ENCODE measurements at regions of chr3 and their contacts with region 1.

Region 1: DNA sequence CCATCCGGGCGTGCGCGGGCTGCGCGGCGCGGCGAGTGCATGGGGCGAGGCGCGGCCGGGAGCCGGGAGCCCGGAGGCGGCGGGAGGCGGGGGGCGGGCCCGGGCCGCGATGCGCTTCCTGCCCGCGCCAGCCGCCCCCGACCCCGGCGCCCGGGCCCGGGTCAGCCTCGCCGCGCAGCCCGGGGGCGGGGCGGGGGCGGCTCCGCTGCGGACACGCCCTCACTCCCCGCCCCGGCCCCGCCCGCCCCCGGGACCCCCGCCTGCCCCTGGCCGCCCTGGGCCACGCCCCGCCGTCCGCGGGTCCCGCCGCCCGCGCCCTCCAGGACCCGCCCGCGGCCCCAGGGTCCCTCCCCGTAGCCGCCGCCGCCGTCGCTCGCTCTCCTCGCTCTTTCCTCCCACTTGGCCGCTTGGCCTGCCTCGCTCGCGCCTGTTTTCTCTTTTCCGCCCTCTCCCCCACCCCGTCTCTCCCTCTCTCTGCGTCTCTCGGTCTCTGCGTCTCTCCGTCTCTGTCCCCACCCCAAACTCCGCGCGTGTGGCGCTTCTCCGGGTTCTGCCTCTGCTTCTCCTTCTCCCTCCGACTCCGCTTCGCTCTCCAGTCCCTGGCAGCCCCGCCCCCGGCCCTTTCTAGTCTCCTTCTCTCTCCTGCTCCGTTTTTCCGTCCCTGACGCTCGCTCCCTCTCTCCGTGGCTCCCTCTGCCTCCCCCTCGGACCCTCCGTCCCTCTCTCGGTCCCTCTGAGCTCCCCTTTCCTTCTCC is at the start of gene PLXND1:
- DNase-seq: peak; percentile 27
- H3K4me3 Mint-ChIP-seq: peak within 1 kb of the TSS; percentile 77
- H3K27ac Mint-ChIP-seq: peak within 1 kb of the TSS; percentile 6
- H3K4me1 Mint-ChIP-seq: peaks cover 7% of the 10 kb centered on the region
- H3K27me3 Mint-ChIP-seq: peaks cover 19% of the 10 kb centered on the region
- total RNA-seq, gene PLXND1: 5.1 to 6.2 TPM

Region 2: GRCh38 chr3:129343643-129344332 is 263.0 kb before region 1 on chr3:
- CTCF ChIA-PET with region 1: no interaction called
- intact Hi-C with region 1: loop called (anchors 5 kb)
- DNase-seq: peak; percentile 44
- H3K4me3 Mint-ChIP-seq: peak overlapping the region; percentile 34
- H3K27ac Mint-ChIP-seq: no peak overlapping the region
- H3K4me1 Mint-ChIP-seq: peaks cover 8% of the 10 kb centered on the region
- H3K27me3 Mint-ChIP-seq: peaks cover 24% of the 10 kb centered on the region

Region 3: DNA sequence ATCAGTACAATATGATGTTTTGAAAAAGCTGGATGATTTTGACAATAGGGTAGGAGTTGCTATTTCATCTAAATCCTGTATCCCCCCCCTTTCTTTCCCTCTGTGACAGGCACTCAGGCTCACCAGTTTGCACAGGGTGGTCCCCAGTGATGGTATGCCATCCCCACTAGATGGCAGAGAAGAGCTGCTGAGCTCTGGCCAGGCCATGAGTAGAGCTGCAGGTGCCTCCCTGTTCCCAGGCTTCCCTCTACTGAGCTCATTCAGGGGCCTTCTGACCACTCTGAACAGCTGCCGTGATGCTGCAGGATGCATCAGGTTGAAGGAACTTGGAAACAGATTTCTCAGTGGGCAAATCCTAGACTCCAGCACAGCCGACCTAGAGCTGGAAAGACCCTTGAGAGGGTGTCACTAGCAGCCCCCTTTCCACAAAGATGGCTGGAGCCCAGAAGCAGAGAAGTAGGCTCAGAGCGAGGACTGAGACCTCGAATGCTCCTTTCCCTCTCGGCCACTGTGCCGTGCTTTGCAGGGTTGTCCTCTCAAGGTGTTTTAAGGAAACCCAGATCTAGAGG is 223.4 kb before region 1 on chr3:
- CTCF ChIA-PET with region 1: interaction called, 3 read pairs
- intact Hi-C with region 1: loop called (anchors 2 kb)
- DNase-seq: peak; percentile 65
- H3K4me3 Mint-ChIP-seq: no peak overlapping the region
- H3K27ac Mint-ChIP-seq: no peak overlapping the region
- H3K4me1 Mint-ChIP-seq: no peaks in the 10 kb centered on the region
- H3K27me3 Mint-ChIP-seq: no peaks in the 10 kb centered on the region

Region 4: GRCh38 chr3:129474984-129475804 is 131.6 kb before region 1 on chr3:
- CTCF ChIA-PET with region 1: no interaction called
- intact Hi-C with region 1: no loop called
- DNase-seq: no peak
- H3K4me3 Mint-ChIP-seq: no peak overlapping the region
- H3K27ac Mint-ChIP-seq: no peak overlapping the region
- H3K4me1 Mint-ChIP-seq: no peaks in the 10 kb centered on the region
- H3K27me3 Mint-ChIP-seq: no peaks in the 10 kb centered on the region

Region 5: DNA sequence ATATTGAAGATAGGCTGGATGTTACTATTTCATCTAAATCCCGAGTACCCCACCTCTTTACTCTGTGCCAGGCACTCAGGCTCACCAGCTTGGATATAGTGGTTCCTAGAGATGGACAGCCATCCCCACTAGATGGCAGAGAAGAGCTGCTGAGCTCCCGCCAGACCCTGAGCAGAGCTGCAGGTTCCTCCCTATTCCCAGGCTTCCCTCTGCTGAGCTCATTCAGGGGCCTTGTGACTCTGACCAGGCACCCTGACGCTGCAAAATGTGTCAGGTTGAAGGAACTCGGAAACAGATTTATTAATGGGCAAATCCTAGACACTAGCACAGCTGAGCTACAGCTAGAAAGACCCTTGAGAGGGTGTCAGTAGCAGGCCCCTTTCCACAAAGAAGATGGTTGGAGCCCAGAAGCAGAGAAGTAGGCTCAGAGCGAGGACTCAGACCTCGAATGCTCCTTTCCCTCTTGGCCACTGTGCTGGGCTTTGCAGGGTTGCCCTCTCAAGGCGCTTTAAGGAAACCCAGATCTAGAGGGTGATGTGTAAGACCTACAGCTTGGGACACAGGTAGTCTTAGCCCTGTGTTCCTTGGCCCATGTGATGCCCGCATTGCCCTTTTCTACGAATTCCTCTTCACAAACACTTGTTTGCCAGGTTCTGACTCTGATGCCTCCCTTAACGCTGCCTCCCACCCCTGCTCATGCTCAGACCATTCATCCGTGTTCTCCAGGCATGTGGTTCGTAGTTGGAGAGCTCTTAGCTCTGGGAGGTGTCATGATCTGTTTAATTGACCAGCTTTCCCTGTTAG is 116.4 kb before region 1 on chr3:
- CTCF ChIA-PET with region 1: interaction called, 5 read pairs
- intact Hi-C with region 1: loop called (anchors 1 kb)
- DNase-seq: peak; percentile 67
- H3K4me3 Mint-ChIP-seq: no peak overlapping the region
- H3K27ac Mint-ChIP-seq: no peak overlapping the region
- H3K4me1 Mint-ChIP-seq: no peaks in the 10 kb centered on the region
- H3K27me3 Mint-ChIP-seq: no peaks in the 10 kb centered on the region

Region 6: DNA sequence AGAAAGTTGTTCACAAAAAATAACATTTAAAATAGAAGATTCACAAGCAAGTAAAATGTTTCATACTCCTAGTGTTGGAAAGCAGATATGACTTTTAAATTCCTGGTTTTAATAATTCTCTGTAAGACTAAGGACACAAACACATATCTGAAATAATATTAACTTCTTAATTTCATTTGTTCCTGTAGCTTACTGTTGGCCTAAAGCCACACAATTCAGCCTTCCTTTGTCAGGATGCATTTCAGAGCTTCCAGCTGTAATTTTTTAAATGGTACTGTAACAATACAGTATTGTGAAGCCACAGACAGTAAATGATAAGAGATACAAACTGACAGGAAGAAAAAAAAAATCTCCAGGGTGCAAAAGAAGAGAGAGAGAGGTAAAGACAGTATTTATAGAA is 202.5 kb after region 1 on chr3:
- CTCF ChIA-PET with region 1: no interaction called
- intact Hi-C with region 1: no loop called
- DNase-seq: no peak
- H3K4me3 Mint-ChIP-seq: no peak overlapping the region
- H3K27ac Mint-ChIP-seq: no peak overlapping the region
- H3K4me1 Mint-ChIP-seq: peaks cover 1% of the 10 kb centered on the region
- H3K27me3 Mint-ChIP-seq: no peaks in the 10 kb centered on the region

Measured in activated naive CD4-positive, alpha-beta T cell treated with anti-CD3 and anti-CD28 coated beads for 36 hours (primary cell).